ENCODE measurements at regions of chr2 and their contacts with region 1.

Region 1: GRCh38 chr2:177164584-177165052 is 48.0 kb upstream of the HNRNPA3 start:
- DNase-seq: peak; percentile 78
- H3K4me3 ChIP-seq: peak overlapping the region; percentile 35 to 59
- H3K27ac ChIP-seq: peak overlapping the region; percentile 39 to 43; a peak in 3 of 4 replicates
- H3K4me1 ChIP-seq: peaks cover 12 to 24% of the 10 kb centered on the region in 2 experiments; a peak in 3 of 4 replicates
- H3K27me3 ChIP-seq: no peaks in the 10 kb centered on the region
- CTCF ChIP-seq: peak; percentile 100
- EP300 ChIP-seq: peak in 1 of 2 experiments; percentile 11; a peak in 1 of 4 replicates
- RAD21 ChIP-seq: peak; percentile 99

Region 2: DNA sequence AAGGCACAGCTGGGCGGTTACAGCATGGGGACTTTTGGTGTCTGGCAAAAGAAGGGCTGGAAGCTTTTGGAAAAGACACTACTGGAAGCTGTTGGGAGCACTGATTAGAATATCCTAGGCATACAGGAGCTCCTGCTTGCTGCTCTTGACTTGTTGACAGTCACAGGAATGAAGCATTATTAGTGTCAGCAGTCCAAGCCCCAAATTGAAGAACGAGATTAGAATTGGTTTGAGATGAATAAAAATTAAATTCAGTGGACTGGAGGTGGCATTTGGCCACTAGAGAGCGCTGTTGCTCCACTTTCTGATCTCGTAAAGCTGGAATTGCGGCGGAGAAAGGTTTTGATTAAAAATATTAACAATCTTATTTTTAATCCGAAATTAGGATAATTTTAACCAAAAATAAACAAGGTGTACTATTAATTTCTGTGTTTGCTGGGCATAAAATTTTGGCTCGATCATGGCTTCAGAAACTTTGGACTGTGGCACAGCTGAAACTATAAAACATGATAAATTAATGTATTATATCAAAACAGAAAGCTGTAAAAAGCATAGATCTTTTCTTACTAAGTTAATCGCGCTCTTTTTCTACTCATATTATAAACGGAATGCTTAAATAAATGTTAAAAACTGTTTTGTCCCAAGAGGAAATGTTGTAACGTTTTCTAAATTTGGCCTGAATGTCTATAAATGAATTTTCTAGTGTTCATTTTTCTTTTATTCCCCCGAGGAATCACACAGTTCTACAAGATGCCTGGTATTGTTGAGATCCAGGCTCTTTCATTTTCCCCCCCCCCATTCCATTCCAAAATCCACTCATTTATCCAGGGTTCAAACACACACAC is 1037.5 kb before region 1 on chr2:
- CTCF ChIA-PET with region 1: interaction called, 16 read pairs
- POLR2A ChIA-PET with region 1: no interaction called
- DNase-seq: peak; percentile 63
- H3K4me3 ChIP-seq: peak overlapping the region; percentile 19 to 25; a peak in 1 of 4 replicates
- H3K27ac ChIP-seq: no peak overlapping the region; a peak in 1 of 4 replicates
- H3K4me1 ChIP-seq: peaks cover 4 to 20% of the 10 kb centered on the region in 2 experiments; a peak in 3 of 4 replicates
- H3K27me3 ChIP-seq: no peaks in the 10 kb centered on the region; the same call in 1 of the 2 replicates
- CTCF ChIP-seq: peak; percentile 97
- EP300 ChIP-seq: no peak; a peak in 1 of 4 replicates
- RAD21 ChIP-seq: peak; percentile 94

Region 3: DNA sequence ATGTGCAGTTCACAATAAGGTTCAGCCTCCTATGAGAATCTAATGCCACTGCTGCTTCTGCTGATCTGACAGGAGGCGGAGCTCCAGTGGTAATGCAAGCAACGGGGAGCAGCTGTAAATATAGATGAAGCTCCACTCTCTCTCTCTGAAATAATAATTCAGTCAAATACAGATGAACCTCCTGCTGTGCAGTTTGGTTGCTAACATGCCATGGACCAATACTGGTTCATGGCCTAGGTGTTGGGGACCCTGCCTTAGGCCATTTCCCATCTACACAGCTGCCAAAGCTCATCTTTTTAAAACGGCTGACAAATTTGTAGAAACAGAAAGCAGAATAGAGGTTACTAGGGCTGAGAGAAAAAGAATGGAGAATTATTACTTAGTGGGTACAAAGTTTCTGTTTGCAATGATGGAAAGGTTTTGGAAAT is 37.3 kb after region 1 on chr2:
- CTCF ChIA-PET with region 1: interaction called, 15 read pairs
- POLR2A ChIA-PET with region 1: no interaction called
- DNase-seq: no peak
- H3K4me3 ChIP-seq: no peak overlapping the region
- H3K27ac ChIP-seq: no peak overlapping the region
- H3K4me1 ChIP-seq: peaks cover 0 to 2% of the 10 kb centered on the region in 2 experiments; a peak in 1 of 4 replicates
- H3K27me3 ChIP-seq: no peaks in the 10 kb centered on the region
- CTCF ChIP-seq: no peak
- EP300 ChIP-seq: no peak
- RAD21 ChIP-seq: no peak

Region 4: DNA sequence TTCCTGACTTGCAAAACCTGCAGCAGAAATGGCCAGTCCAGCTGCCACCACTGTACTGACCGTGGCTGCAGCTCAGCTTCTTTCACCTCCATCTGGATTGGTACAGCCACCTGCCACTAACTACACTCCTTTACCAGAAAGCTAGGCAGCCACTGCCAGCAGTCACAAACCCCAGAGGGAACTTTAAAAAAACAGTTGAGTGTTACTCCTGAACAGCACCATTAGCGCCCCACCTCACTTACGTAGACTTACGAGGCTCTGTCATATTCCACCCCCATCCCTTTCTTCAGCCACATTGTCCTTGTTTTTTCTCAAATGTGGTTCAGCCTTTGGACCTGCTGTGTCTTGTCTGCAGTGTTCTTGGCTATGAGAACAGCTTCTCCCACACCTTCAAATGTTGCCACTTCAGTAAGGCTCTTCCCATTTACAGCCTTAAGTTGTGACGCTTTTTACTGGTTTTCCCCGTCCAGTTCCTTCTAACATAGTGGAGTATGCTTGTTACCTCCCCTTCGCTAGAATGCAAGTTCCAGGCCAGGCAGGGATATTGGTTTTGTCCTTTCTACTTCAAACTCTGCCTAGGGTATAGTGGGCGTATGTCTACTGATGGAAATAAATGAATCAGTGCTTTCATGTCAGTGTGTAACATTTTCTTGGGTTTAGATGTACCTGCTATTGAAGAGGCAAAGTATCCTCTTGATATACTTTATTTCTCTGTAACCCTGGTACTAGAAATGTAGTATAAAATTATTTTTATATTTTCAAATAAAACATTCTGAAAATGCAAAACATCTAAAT is 65.0 kb after region 1 on chr2:
- CTCF ChIA-PET with region 1: interaction called, 17 read pairs
- POLR2A ChIA-PET with region 1: no interaction called
- DNase-seq: no peak
- H3K4me3 ChIP-seq: no peak overlapping the region
- H3K27ac ChIP-seq: peak overlapping the region in 1 of 2 experiments; percentile 2; a peak in 2 of 4 replicates
- H3K4me1 ChIP-seq: no peaks in the 10 kb centered on the region; a peak in 1 of 4 replicates
- H3K27me3 ChIP-seq: no peaks in the 10 kb centered on the region
- CTCF ChIP-seq: no peak
- EP300 ChIP-seq: no peak
- RAD21 ChIP-seq: no peak

Region 5: DNA sequence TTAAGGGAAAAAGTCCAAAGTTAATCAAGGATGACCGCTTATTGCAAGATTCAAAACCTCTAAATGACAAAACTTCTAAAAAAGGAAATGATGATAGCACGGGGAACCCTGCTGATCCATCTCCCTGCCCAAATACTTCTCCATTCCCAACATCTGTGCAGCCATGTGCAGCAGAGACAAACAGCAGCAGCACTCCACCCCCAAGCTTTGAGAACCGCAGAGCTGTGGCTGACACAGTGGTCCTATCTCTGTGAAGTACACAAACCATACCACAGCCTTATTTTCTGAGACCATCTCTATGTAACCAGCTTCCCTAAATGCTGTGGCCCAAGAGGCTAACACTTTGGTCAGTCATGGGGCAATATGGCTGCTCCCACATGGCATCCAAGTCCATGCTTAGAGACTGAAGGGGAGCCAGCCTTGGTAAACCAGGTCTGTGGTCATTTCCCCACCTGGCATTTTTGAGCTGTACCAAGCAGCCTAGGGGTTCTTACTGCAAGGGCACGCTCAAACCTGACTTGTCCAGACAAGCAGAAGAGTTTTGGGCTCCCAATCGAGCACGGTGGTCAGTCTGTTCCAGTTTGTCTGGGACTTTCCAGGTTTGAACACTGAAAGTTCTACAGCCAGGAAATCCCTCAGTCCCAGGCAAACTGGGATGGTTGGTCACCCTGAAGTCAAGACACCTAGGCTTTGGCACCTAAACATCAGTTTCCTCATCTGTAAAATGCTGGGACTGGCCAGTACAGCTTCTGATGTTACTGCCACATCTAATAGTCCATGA is 117.0 kb after region 1 on chr2:
- CTCF ChIA-PET with region 1: interaction called, 15 read pairs
- POLR2A ChIA-PET with region 1: no interaction called
- DNase-seq: no peak
- H3K4me3 ChIP-seq: no peak overlapping the region
- H3K27ac ChIP-seq: no peak overlapping the region
- H3K4me1 ChIP-seq: peaks cover 4 to 14% of the 10 kb centered on the region in 2 experiments; a peak in 2 of 4 replicates
- H3K27me3 ChIP-seq: no peaks in the 10 kb centered on the region
- CTCF ChIP-seq: no peak
- EP300 ChIP-seq: no peak
- RAD21 ChIP-seq: no peak

Region 6: GRCh38 chr2:177332041-177332991 is 167.7 kb after region 1 on chr2:
- CTCF ChIA-PET with region 1: interaction called, 90 read pairs
- POLR2A ChIA-PET with region 1: interaction called, 3 read pairs
- DNase-seq: peak; percentile 46
- H3K4me3 ChIP-seq: no peak overlapping the region; a peak in 1 of 4 replicates
- H3K27ac ChIP-seq: peak overlapping the region; percentile 58 to 67
- H3K4me1 ChIP-seq: peaks cover 3 to 13% of the 10 kb centered on the region in 2 experiments; a peak in 3 of 4 replicates
- H3K27me3 ChIP-seq: no peaks in the 10 kb centered on the region
- CTCF ChIP-seq: peak; percentile 75
- EP300 ChIP-seq: no peak
- RAD21 ChIP-seq: peak; percentile 87

Region 7: GRCh38 chr2:177733322-177733855 is 568.8 kb after region 1 on chr2:
- CTCF ChIA-PET with region 1: interaction called, 17 read pairs
- POLR2A ChIA-PET with region 1: no interaction called
- DNase-seq: no peak
- H3K4me3 ChIP-seq: no peak overlapping the region
- H3K27ac ChIP-seq: no peak overlapping the region
- H3K4me1 ChIP-seq: no peaks in the 10 kb centered on the region
- H3K27me3 ChIP-seq: no peaks in the 10 kb centered on the region
- CTCF ChIP-seq: no peak
- EP300 ChIP-seq: no peak
- RAD21 ChIP-seq: no peak